Right ventricle myocardium superior (tissue), 1 donor: ENCODE measurements at regions of chr9 and their contacts with region 1.

Region 1: GRCh38 chr9:34591248-34591916 is 1.9 kb upstream of the CNTFR start:
- DNase-seq: peak; percentile 93
- ATAC-seq: peak; percentile 89

Region 2: DNA sequence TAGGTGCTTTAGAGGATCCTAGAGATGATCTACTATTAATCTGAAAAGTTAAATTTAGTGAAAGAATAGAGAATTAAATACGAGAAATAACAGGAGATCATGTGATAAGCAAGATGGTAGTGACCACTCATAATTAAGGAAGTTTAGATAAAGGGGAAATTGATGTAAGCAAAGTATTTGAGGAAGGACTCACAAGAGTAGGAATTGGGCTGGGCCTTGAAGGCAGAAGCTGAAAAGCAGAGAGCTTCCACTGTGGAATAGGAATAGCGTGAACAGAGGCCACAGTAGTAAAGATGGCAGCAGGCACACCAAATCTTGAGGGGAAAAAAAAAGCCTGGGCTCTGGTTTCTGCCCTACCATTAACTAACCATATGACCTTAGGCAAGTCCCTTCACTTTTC is 300.4 kb before region 1 on chr9:
- intact Hi-C with region 1: no loop called
- DNase-seq: no peak
- ATAC-seq: no peak

Region 3: GRCh38 chr9:34403554-34404380 is 187.6 kb before region 1 on chr9:
- intact Hi-C with region 1: loop called (anchors 10 kb)
- DNase-seq: peak; percentile 72
- ATAC-seq: peak; percentile 71

Region 4: DNA sequence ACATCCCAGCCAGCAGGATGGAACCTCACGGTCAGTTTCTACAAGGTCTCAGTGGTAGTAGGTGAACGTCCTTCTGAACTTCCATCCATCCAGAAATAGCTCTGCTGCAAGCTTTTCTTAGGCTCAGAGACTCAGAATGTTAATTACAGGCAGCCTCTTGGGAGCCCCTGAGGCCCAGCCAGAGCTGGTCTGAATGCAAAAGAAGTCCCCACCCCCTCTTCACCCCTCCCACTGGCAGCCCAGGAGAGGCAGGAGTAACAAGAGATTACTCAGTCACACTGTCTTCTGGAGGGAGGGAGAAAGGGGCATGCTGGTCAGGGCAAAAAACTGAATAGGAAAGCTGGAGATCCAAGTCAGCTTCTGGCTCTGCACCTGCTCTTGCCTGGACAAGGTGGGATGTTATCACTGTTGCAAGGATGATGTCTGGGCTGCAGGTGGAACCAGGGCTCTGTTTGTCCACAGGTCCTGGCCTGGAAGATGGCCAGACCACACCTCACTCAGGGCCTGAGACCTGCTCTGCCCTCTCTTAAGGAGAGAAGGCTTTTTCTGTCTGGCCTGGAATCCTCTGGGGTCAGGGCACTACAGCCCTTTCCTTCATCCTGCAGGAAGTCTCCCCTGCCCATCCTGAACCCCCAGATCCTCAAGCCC is 77.7 kb before region 1 on chr9:
- intact Hi-C with region 1: no loop called
- DNase-seq: no peak
- ATAC-seq: peak; percentile 45

Region 5: GRCh38 chr9:34547960-34548611 is 43.3 kb before region 1 on chr9:
- intact Hi-C with region 1: loop called (anchors 2 kb)
- DNase-seq: peak; percentile 86
- ATAC-seq: peak; percentile 95